Mammary epithelial cell (primary cell): ENCODE measurements at regions of chr15 and their contacts with region 1.

Region 1: DNA sequence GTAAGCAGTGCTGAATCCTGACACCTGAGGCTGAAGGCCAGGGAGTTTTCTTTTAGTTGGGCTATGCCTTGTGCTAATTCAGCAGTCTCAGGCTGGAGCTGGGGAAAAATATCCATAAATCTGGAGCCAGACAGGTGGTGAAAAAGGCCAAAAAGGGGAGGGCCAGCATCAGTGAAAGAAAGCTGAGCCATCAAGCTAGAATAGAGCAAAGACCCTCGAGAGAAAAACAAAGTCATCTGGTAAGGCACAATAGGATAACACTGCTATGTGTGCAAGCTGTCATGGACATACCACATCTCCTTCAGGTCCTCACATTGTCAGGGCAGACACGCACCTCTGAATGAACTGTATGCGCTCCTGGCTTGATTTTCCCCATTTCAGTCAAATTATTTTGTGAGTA is 687.9 kb downstream of the SQOR start:
- DNase-seq: no peak
- H3K4me3 ChIP-seq: no peak overlapping the region
- H3K27ac ChIP-seq: no peak overlapping the region
- H3K4me1 ChIP-seq: no peaks in the 10 kb centered on the region
- H3K27me3 ChIP-seq: no peaks in the 10 kb centered on the region
- CTCF ChIP-seq: no peak

Region 2: GRCh38 chr15:46708226-46708625 is 385.5 kb after region 1 on chr15:
- CTCF ChIA-PET with region 1: interaction called, 10 read pairs
- dilution Hi-C with region 1: no loop called
- in situ Hi-C with region 1: no loop called
- intact Hi-C with region 1: no loop called
- DNase-seq: no peak
- H3K4me3 ChIP-seq: no peak overlapping the region
- H3K27ac ChIP-seq: no peak overlapping the region
- H3K4me1 ChIP-seq: no peaks in the 10 kb centered on the region
- H3K27me3 ChIP-seq: no peaks in the 10 kb centered on the region
- CTCF ChIP-seq: no peak